Right ventricle myocardium inferior (tissue), 1 donor: ENCODE measurements at regions of chr3 and their contacts with region 1.

Region 1: GRCh38 chr3:157174649-157175498 is 14.9 kb upstream of the CCNL1 start:
- DNase-seq: peak; percentile 99
- ATAC-seq: peak; percentile 97

Region 2: GRCh38 chr3:157159762-157160657 is 14.9 kb before region 1 on chr3 and contains the start of gene CCNL1:
- intact Hi-C with region 1: loop called (anchors 1 kb)
- DNase-seq: peak; percentile 99
- ATAC-seq: peak; percentile 96
- total RNA-seq, gene CCNL1: 21.2 TPM

Region 3: GRCh38 chr3:157248590-157249422 is 73.9 kb after region 1 on chr3:
- intact Hi-C with region 1: loop called (anchors 10 kb)
- DNase-seq: no peak
- ATAC-seq: peak; percentile 82